Caco-2 (cell line): ENCODE measurements at regions of chr20 and their contacts with region 1.

Region 1: DNA sequence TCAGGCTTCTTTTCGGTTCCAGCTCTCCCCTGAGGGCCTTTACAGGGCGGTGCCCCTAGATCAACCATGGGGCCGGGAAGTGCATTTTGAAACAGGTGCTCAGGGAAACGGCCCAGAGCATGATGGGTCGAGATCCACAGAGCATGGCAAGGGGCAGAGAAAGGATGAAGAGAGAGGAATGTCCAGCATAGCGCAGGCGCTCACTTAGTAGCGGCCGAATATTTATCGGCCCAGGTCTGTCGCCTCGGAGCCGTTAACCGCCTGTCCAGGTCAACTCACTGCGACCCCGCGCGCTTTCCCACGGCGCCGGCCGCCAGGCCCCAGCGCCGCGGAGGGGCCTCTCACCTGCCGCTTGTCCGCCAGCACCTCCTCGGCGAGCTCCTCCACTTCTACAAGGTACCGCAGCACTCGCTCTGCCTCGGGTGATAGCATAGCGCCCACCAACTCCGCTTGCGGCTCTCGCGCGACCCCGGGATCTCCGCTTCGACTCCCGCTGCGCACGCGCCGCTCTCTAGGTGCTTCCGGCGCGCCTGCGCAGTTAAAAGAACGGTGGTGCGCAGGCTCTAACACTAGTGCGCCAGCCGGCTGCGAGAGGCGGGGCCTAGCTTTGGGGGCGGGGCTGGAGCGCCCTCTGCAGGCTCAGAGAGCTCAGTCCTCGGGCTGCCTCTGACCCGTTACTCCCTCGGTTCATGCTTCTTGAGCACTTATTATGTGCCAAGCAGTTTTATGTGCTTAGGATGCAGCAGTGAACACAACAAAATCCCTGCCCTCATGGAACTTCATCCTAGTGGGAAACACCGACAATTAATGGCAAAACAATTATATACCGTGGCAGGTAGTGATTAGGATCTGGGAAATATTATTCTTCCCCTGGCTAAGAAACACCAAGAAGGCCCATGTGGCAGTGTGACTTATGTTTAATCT is at the start of gene PDRG1:
- DNase-seq: peak; percentile 98 to 100
- H3K4me3 ChIP-seq: peak within 1 kb of the TSS; percentile 61
- H3K4me3 Mint-ChIP-seq: peak within 1 kb of the TSS; percentile 95
- H3K27ac Mint-ChIP-seq: peak within 1 kb of the TSS; percentile 96
- H3K4me1 ChIP-seq: peaks cover 6% of the 10 kb centered on the region; the same call in 1 of the 2 replicates
- H3K4me1 Mint-ChIP-seq: peaks cover 11% of the 10 kb centered on the region
- H3K27me3 ChIP-seq: no peaks in the 10 kb centered on the region
- H3K27me3 Mint-ChIP-seq: peaks cover 5% of the 10 kb centered on the region
- CTCF ChIP-seq: peak; percentile 98 to 100
- total RNA-seq, gene PDRG1: 55.7 and 56.8 TPM in 2 replicates

Region 2: DNA sequence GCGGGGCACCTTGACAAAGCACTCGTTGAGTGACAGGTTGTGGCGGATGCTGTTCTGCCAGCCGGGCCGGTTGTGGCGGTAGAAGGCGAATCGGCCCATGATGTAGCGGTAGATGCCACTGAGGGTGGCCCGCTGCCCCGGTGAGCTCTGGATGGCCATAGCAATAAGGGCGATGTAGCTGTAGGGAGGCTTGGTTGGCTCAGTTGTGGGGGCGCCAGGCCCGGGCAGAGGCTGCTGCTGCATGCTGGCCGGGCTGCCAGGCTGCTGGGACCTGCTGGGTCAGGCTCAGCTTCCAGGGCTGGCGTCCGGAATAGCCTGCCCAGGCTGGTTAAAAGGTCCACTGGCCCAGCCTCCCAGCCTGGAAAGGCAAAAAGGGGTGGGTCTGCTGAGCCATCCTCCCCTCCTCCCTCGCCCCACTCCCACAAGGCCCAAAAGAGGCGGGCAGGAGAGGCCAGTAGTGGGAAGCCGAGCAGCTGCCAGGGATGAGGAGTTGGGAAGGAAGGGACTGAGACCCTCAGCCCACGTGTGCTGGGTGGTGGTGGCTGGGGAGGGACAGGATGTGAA is 106.4 kb before region 1 on chr20 and contains the start of gene FOXS1:
- CTCF ChIA-PET with region 1: interaction called, 41 read pairs
- POLR2A ChIA-PET with region 1: interaction called, 3 read pairs
- intact Hi-C with region 1: no loop called
- DNase-seq: no peak
- H3K4me3 ChIP-seq: no peak within 1 kb of the TSS
- H3K4me3 Mint-ChIP-seq: no peak within 1 kb of the TSS
- H3K27ac Mint-ChIP-seq: no peak within 1 kb of the TSS
- H3K4me1 ChIP-seq: peaks cover 7% of the 10 kb centered on the region; the same call in 1 of the 2 replicates
- H3K4me1 Mint-ChIP-seq: no peaks in the 10 kb centered on the region
- H3K27me3 ChIP-seq: peaks cover 6% of the 10 kb centered on the region
- H3K27me3 Mint-ChIP-seq: peaks cover 10% of the 10 kb centered on the region
- CTCF ChIP-seq: no peak
- total RNA-seq, gene FOXS1: not detected in 2 replicates

Region 3: DNA sequence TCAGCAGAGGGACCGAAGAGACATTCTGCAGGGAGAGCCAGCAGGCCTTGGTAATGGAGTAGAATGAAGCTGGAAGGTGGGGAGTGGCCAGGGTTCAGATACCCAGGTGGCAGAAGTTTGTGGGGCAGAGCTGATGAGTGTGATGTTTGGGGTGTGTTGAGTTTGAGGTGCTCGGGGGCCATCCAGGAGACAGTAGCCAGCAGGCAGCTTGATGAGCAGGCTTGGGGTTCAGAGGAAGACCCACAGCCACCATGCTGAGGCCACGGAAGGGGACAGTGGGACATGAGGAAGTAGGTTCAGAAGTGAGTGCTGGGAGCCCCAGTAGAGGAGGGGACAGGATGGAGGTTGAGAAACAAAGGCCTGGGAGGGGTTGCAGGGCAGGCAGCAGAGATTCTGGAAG is 95.3 kb before region 1 on chr20:
- CTCF ChIA-PET with region 1: interaction called, 110 read pairs
- POLR2A ChIA-PET with region 1: interaction called, 3 read pairs
- intact Hi-C with region 1: loop called (anchors 1 kb)
- DNase-seq: peak in 1 of 2 experiments; percentile 34
- H3K4me3 ChIP-seq: no peak overlapping the region
- H3K4me3 Mint-ChIP-seq: no peak overlapping the region
- H3K27ac Mint-ChIP-seq: no peak overlapping the region
- H3K4me1 ChIP-seq: peaks cover 11% of the 10 kb centered on the region
- H3K4me1 Mint-ChIP-seq: peaks cover 8% of the 10 kb centered on the region
- H3K27me3 ChIP-seq: 0 out of 2 replicates have a peak, but pooled peaks cover 1% of the 10 kb centered on the region
- H3K27me3 Mint-ChIP-seq: peaks cover 7% of the 10 kb centered on the region
- CTCF ChIP-seq: no peak

Region 4: GRCh38 chr20:31879143-31879987 is 72.4 kb before region 1 on chr20:
- CTCF ChIA-PET with region 1: interaction called, 31 read pairs
- POLR2A ChIA-PET with region 1: no interaction called
- intact Hi-C with region 1: loop called (anchors 1 kb)
- DNase-seq: peak; percentile 99 to 100
- H3K4me3 ChIP-seq: peak overlapping the region; percentile 82
- H3K4me3 Mint-ChIP-seq: peak overlapping the region; percentile 88
- H3K27ac Mint-ChIP-seq: peak overlapping the region; percentile 95
- H3K4me1 ChIP-seq: no peaks in the 10 kb centered on the region
- H3K4me1 Mint-ChIP-seq: peaks cover 12% of the 10 kb centered on the region
- H3K27me3 ChIP-seq: no peaks in the 10 kb centered on the region
- H3K27me3 Mint-ChIP-seq: peaks cover 2% of the 10 kb centered on the region
- CTCF ChIP-seq: no peak

Region 5: DNA sequence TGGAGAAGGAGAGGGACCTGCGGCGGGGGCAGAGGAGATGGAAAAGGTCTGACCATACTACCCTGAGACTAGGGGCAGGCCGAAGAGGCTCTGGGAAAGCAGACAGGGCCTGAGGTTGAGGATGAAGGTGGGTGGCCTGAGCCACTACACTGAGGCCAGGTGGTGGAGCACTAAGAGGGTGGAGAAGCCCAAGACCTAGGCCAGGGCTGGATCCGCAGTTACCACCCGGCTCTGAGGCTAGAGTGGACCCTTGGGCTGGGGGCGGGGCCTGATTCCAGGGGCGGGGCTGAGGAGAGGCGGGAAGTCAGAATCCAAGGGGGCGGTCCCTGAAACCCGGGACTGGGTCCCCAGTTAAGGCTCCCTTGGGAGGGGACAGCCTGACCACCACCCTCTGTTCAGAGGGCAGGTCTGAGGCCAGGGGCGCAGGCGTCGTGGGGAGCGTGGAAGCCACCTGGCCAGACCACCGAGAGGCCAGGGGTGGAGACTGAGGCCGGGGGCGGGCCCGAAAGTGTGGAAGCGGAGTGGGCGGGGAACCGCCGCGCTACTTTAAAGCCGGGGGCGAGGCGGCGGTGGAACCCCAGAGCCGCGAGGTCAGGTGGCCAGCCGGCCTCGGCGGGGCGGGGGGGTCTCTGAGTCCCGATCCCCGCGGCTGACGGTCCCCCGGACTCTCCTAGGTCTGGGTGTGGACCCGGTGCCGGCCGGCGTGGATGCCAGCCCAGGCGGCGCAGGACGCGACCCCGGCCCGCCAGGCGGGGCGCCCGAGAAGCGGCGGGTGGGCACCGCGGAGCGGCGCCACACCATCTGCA is 66.7 kb after region 1 on chr20:
- CTCF ChIA-PET with region 1: interaction called, 39 read pairs
- POLR2A ChIA-PET with region 1: interaction called, 3 read pairs
- intact Hi-C with region 1: loop called (anchors 5 kb)
- DNase-seq: peak; percentile 98
- H3K4me3 ChIP-seq: peak overlapping the region; percentile 79
- H3K4me3 Mint-ChIP-seq: peak overlapping the region; percentile 93
- H3K27ac Mint-ChIP-seq: peak overlapping the region; percentile 85
- H3K4me1 ChIP-seq: peaks cover 12% of the 10 kb centered on the region
- H3K4me1 Mint-ChIP-seq: peaks cover 13% of the 10 kb centered on the region
- H3K27me3 ChIP-seq: peaks cover 13% of the 10 kb centered on the region
- H3K27me3 Mint-ChIP-seq: peaks cover 46% of the 10 kb centered on the region
- CTCF ChIP-seq: peak in 1 of 2 experiments; percentile 14

Region 6: DNA sequence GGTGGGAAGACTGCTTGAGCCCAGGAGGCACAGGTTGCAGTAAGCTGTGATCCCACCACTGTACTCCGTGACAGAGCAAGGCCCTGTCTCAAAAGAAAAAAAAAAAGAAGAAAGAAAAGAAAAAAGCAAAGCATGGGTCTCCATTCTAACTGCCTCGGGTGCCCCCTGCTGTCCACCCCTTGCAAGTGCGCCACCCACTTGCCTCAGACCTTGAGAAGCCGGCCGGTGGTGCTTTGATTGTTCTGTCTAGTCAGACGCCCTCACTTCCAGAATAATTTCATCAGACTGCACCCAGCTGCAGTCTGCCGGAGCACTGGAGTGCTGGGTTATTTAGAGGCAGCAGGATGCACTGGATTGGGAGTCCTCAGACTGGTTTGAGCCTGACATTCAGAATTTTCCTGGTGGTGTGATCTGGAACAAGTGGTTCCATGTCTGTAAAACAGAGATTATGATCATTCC is 140.1 kb after region 1 on chr20:
- CTCF ChIA-PET with region 1: no interaction called
- POLR2A ChIA-PET with region 1: no interaction called
- intact Hi-C with region 1: loop called (anchors 5 kb)
- DNase-seq: peak; percentile 91 to 95
- H3K4me3 ChIP-seq: no peak overlapping the region
- H3K4me3 Mint-ChIP-seq: no peak overlapping the region
- H3K27ac Mint-ChIP-seq: no peak overlapping the region
- H3K4me1 ChIP-seq: no peaks in the 10 kb centered on the region
- H3K4me1 Mint-ChIP-seq: no peaks in the 10 kb centered on the region
- H3K27me3 ChIP-seq: no peaks in the 10 kb centered on the region; the same call in 1 of the 2 replicates
- H3K27me3 Mint-ChIP-seq: peaks cover 13% of the 10 kb centered on the region
- CTCF ChIP-seq: peak; percentile 99 to 100

Region 7: DNA sequence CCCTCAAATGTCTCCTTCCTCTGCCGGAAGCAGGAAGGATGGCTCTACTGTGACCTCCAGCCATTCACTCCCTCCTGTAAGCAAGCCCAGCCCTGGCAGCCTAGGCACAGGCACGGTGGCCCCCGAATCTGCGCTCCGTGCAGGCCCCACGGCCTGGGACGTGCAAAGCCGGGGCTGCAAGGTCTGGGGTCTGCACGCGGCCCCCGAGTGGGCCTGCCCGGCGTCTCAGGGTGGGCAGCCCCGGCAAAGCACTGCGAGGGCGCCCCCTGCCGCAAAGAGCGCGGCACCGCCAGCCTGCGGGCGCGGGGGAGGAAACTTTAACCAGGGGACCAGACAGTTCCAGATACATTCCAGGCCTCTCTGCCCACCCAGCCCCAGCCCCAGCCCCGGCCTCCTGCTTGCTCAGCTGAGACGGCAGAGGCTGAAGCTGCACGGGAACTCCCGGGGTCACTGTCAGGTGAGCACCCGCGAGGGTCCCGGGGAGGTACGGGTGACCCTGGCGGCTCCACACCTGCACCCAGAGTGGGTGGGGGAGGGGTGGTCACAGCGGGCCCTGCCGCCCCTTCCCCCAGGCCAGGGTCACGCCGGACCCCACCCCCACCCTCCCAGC is 505.2 kb after region 1 on chr20:
- CTCF ChIA-PET with region 1: no interaction called
- POLR2A ChIA-PET with region 1: no interaction called
- intact Hi-C with region 1: no loop called
- DNase-seq: no peak
- H3K4me3 ChIP-seq: no peak overlapping the region
- H3K4me3 Mint-ChIP-seq: no peak overlapping the region
- H3K27ac Mint-ChIP-seq: no peak overlapping the region
- H3K4me1 ChIP-seq: no peaks in the 10 kb centered on the region
- H3K4me1 Mint-ChIP-seq: peaks cover 6% of the 10 kb centered on the region
- H3K27me3 ChIP-seq: no peaks in the 10 kb centered on the region
- H3K27me3 Mint-ChIP-seq: no peaks in the 10 kb centered on the region
- CTCF ChIP-seq: peak in 1 of 2 experiments; percentile 36